Left ventricle myocardium inferior (tissue), 1 donor: ENCODE measurements at regions of chr15 and their contacts with region 1.

Region 1: DNA sequence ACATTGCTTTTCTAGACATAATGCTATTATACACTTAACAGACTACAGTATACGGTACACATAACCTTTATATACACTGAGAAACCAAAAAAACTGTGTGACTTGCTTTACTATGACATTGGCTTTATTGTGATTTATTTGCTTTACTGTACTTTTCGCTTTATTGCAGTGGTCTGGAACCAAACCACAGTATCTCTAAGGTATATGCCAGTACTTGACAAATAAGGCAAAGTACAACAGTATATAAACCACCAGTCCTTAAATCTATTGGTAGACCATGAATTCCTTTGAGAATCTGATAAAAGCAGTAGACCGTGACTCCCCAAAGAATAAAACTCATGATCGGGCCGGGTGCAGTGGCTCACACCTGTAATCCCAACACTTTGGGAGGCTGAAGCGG is 50.3 kb downstream of the HERC1 start:
- DNase-seq: no peak
- H3K4me3 ChIP-seq: no peak overlapping the region
- H3K27ac ChIP-seq: no peak overlapping the region
- H3K4me1 ChIP-seq: peaks cover 15% of the 10 kb centered on the region
- H3K27me3 ChIP-seq: no peaks in the 10 kb centered on the region
- CTCF ChIP-seq: no peak

Region 2: GRCh38 chr15:63818191-63818590 is 34.8 kb after region 1 on chr15:
- intact Hi-C with region 1: loop called (anchors 5 kb)
- DNase-seq: no peak
- H3K4me3 ChIP-seq: no peak overlapping the region
- H3K27ac ChIP-seq: peak overlapping the region; percentile 4
- H3K4me1 ChIP-seq: peaks cover 96% of the 10 kb centered on the region
- H3K27me3 ChIP-seq: no peaks in the 10 kb centered on the region
- CTCF ChIP-seq: no peak

Region 3: DNA sequence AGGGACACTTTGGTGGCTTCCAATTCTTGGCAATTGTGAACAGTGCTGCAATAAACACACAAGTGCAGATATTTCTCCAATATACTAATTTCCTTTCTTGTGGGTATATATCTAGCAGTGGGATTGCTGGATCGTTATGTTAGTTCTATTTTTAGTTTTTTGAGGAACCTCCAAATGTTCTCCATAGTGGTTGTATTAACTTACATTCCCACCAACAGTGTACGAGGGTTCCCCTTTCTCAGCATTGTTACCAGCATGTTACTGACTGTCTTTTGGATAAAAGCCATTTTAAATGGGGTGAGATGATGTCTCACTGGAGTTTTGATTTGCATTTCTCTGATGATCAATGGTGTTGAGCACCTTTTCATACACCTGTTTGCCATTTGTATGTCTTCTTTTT is 170.1 kb after region 1 on chr15:
- intact Hi-C with region 1: no loop called
- DNase-seq: no peak
- H3K4me3 ChIP-seq: no peak overlapping the region
- H3K27ac ChIP-seq: no peak overlapping the region
- H3K4me1 ChIP-seq: no peaks in the 10 kb centered on the region
- H3K27me3 ChIP-seq: no peaks in the 10 kb centered on the region
- CTCF ChIP-seq: no peak